Sigmoid colon (tissue), 7 donors: ENCODE measurements at regions of chr11 and their contacts with region 1.

Region 1: DNA sequence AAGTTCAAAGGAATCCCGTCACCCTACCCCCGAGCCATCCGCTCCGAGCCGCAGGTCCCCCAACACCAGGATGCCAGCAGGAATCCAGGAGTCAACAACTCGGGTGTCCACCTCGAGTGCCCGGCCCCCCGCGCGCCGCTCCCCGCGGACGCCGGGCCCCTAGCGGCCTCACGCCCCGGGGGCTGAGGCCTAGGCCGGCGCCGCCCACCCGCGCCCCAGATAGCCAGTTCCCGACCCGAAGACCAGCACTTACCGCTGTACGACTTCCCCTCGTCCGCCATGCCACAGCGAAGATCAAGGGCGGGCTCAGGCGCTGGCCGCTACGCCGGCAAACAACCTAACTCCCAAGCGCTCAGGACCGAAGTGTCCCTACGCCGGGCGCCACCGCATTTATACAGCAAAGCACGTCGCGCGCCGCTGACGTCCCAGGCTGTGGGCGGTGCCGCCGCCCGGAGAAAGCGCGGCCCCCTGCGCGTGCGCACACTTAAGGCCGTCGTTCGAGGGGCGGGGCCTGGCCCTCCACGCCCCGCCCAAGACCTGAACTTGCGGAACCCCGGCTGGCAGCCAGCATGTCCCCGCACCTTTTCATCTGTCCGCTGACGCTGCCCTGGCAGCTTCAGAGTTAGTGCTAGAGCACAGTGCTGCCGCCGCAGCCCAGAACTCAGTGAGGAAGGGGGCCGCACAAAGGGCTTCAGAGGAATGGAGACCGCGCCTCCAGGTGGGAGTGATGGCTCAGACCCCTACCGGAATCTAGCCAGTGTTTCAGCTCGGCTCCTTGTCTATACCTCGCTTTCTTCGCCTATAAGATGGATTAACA is at the start of gene NXF1:
- DNase-seq: peak; percentile 97
- H3K4me3 ChIP-seq: peak within 1 kb of the TSS; percentile 67 to 93 (median 70)
- H3K27ac ChIP-seq: peak within 1 kb of the TSS; percentile 83 to 96 (median 90)
- H3K4me1 ChIP-seq: peaks cover 0 to 25% (median 21%) of the 10 kb centered on the region in 4 donors
- H3K27me3 ChIP-seq: no peaks in the 10 kb centered on the region
- CTCF ChIP-seq: no peak
- EP300 ChIP-seq: no peak
- POLR2A ChIP-seq: peak; percentile 98
- total RNA-seq, gene NXF1: 33.2 to 68.1 (median 43.0) TPM

Region 2: DNA sequence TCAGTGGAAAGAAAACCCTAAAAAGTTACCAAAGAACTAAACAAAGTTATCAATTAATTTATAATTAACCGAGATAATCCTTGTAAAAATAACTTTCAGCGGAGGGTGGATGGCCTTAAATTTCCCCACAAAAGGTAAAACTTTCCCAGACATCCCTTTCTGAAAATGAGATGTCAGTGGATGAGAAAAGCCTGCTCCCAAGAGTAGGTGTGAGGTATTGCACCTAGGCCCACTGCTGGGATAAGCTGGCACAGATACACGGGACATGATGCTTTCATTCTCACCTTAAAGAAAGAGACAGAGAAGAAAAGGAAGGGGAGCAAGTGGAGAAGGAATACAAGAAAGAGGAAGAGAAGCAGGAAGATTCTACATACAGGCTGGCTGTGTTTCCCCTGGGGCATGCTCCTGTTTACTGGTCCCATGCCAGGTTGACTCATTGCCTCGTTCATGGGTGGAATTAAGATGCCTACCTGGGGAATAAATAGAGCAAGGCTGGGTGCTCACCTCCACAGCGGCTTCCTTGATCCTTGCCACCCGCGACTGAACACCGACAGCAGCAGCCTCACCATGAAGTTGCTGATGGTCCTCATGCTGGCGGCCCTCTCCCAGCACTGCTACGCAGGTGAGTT is 535.5 kb before region 1 on chr11 and contains the start of gene SCGB2A2:
- intact Hi-C with region 1: no loop called
- DNase-seq: no peak
- H3K4me3 ChIP-seq: no peak within 1 kb of the TSS
- H3K27ac ChIP-seq: no peak within 1 kb of the TSS
- H3K4me1 ChIP-seq: no peaks in the 10 kb centered on the region
- H3K27me3 ChIP-seq: no peaks in the 10 kb centered on the region
- CTCF ChIP-seq: no peak
- EP300 ChIP-seq: no peak
- POLR2A ChIP-seq: no peak
- total RNA-seq, gene SCGB2A2: not detected

Region 3: DNA sequence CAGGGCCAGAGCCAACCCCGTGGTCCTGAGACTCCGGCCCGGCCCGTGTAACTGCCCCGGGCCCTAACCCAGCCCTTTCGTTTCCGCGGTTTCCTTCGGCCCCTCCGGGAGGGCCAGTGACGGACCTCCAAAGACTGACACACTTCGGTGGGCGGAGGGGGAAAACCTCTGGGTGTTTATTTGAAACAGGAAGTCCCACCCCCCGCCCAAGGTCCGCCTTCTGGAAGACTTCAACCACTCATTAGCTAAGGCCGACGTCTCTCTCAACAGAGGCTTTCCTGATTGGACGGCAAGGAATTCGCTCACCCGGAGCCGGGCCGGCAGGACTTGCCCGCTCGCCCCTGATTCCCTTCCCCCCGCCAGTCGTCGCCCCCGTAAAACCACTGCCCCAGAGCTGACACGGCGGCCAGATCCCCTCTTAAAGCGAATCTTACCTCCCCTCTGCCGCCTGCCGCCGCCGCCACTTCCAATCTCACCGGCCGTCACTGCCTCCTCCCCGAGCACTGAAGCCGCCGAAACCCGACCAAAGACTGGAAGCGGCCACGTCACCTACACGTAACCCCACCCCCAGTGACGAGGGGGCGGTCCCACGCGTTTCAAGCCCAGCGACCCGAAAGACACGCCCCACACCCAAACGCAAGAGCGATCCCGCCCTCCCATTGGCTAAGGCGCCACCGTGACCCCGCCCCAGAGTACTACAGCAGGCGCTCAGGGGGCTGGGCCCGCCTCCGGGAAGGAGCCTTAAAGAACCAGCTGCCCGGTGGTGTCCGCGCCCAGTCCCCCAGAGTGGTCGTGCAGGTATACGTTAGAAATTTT is 26.4 kb after region 1 on chr11 and contains the start of gene STX5:
- intact Hi-C with region 1: loop called (anchors 2 kb)
- DNase-seq: peak; percentile 100
- H3K4me3 ChIP-seq: peak within 1 kb of the TSS; percentile 77 to 90 (median 84)
- H3K27ac ChIP-seq: peak within 1 kb of the TSS; percentile 95 to 99 (median 96)
- H3K4me1 ChIP-seq: peaks cover 0 to 51% (median 45%) of the 10 kb centered on the region in 4 donors
- H3K27me3 ChIP-seq: no peaks in the 10 kb centered on the region
- CTCF ChIP-seq: no peak
- EP300 ChIP-seq: no peak
- POLR2A ChIP-seq: peak; percentile 87 to 90
- total RNA-seq, gene STX5: 27.1 to 37.8 (median 31.2) TPM

Region 4: GRCh38 chr11:62948765-62949320 is 143.6 kb after region 1 on chr11:
- intact Hi-C with region 1: no loop called
- DNase-seq: no peak
- H3K4me3 ChIP-seq: no peak overlapping the region
- H3K27ac ChIP-seq: no peak overlapping the region
- H3K4me1 ChIP-seq: no peaks in the 10 kb centered on the region
- H3K27me3 ChIP-seq: no peaks in the 10 kb centered on the region
- CTCF ChIP-seq: no peak
- EP300 ChIP-seq: no peak
- POLR2A ChIP-seq: no peak